ENCODE measurements at regions of chr11 and their contacts with region 1.

Region 1: DNA sequence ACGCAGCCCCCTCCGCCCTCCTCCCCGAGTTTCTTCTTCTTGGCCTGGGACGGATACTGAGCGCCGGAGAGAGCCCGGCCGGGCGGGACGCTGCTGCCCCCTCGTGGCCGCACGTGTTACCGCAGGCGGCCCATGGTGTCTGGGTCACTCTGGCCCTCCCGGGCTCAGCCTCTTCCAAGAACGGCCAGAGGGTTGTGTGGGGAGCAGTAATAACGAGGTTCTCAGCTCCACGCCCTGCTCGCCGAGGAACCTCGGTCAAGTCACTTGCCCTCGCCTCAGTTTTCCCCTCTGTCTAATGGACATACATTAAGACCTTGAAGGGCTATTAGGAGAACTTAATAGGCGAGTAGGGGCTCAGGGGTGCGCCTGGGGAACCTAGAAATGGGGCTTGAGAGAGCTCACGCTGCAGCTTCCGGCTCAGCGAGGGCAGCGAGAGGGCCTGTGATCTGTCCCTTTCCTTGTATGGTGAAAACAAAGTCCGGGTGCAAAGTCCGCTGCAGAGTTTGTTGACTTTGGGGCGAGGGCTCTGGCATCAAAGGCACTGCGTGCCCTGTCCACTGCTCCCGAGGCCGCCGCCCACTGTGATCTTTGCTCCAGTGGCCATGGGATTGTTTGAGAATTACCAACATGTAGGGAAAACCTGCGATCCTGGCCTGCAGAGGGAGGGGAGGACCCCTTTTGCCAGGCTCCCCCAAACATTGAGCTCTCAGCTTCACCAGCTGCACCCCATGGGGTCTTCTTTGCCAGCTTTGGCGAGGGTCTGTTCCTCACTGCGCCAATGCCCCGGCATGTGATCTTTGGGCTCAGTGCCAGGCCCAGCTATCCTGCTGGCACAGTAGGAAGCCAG is 14.4 kb upstream of the LRP5 start:
- DNase-seq: peak; percentile 81
- H3K4me3 Mint-ChIP-seq: no peak overlapping the region
- H3K27ac Mint-ChIP-seq: no peak overlapping the region
- H3K4me1 Mint-ChIP-seq: no peaks in the 10 kb centered on the region
- H3K27me3 Mint-ChIP-seq: peaks cover 1% of the 10 kb centered on the region

Region 2: DNA sequence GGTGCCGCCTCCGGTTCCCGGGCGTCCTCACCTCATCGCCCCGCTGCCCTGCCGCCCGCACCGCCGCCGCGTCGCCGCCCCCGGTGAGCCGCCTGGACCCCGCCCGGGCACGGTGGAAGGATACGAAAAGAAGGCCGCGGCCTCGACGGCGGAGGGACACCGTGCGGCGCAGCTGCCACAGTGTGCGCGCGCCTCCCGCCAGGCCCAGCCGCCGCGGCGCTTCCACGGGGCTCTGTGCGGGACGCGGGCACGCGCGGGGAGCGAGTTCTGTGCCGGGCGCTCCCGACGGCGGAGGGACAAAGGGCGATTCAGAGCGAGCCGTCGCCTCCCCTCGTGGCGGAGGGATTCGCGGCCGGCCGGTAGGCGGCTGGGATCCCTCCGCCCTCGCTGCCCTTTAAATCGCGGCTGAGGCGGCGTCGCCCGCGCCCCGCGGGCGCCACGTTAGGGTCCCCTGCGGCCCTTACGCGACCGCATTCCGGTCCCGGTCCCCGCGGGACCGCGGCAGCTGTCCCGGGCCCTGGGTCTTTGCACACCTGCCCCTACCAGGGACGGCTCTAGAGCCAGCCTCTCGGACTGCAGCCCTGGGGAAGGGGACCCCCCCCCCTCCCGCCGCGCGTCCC is 84.4 kb before region 1 on chr11:
- CTCF ChIA-PET with region 1: interaction called, 35 read pairs
- POLR2A ChIA-PET with region 1: no interaction called
- intact Hi-C with region 1: loop called (anchors 5 kb)
- DNase-seq: peak; percentile 81
- H3K4me3 Mint-ChIP-seq: peak overlapping the region; percentile 69
- H3K27ac Mint-ChIP-seq: peak overlapping the region; percentile 82
- H3K4me1 Mint-ChIP-seq: peaks cover 44% of the 10 kb centered on the region
- H3K27me3 Mint-ChIP-seq: peaks cover 6% of the 10 kb centered on the region

Region 3: GRCh38 chr11:68235650-68236049 is 62.4 kb before region 1 on chr11:
- CTCF ChIA-PET with region 1: no interaction called
- POLR2A ChIA-PET with region 1: no interaction called
- intact Hi-C with region 1: no loop called
- DNase-seq: no peak
- H3K4me3 Mint-ChIP-seq: no peak overlapping the region
- H3K27ac Mint-ChIP-seq: no peak overlapping the region
- H3K4me1 Mint-ChIP-seq: no peaks in the 10 kb centered on the region
- H3K27me3 Mint-ChIP-seq: peaks cover 8% of the 10 kb centered on the region

Region 4: GRCh38 chr11:68257475-68258362 is 40.3 kb before region 1 on chr11:
- CTCF ChIA-PET with region 1: interaction called, 227 read pairs
- POLR2A ChIA-PET with region 1: interaction called, 3 read pairs
- intact Hi-C with region 1: loop called (anchors 1 kb)
- DNase-seq: peak; percentile 94
- H3K4me3 Mint-ChIP-seq: no peak overlapping the region
- H3K27ac Mint-ChIP-seq: no peak overlapping the region
- H3K4me1 Mint-ChIP-seq: peaks cover 3% of the 10 kb centered on the region
- H3K27me3 Mint-ChIP-seq: no peaks in the 10 kb centered on the region

Region 5: DNA sequence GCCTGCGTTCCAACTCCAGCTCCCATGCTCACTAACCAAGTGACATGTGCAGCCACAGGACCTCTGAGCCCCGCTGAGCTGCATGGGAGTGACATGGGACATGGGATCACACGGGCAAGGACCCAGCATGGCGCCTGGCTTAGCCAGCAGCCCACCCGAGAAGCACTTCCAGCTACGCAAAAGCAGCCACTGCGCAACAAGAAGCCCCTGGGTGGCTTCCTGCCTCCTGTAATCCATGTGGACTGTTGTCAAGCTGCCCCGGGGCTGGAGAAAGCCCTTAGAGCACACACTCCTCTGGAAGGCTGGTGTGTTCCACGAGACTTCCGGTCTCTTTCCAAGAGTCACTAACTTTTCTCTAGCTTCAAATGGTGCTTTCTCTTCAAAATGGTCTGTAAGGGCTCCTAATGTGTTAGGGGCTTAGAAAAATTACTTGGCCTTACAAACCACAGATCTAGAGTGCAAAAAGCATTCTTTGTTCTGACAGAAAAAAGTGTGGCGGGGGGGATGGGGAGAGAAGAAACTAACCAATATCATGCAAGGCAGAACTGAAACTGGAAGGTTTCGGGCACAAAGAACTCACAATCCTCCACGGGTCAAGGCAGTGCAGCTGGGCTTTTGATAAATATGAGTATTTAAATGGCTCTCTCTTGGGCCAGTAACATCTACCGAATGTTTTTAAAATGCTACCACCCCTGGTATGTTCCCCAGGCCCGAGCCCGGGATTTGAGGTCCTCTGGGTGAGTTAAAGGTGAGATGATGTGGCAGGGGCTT is 31.7 kb before region 1 on chr11:
- CTCF ChIA-PET with region 1: interaction called, 46 read pairs
- POLR2A ChIA-PET with region 1: no interaction called
- intact Hi-C with region 1: loop called (anchors 1 kb)
- DNase-seq: no peak
- H3K4me3 Mint-ChIP-seq: no peak overlapping the region
- H3K27ac Mint-ChIP-seq: no peak overlapping the region
- H3K4me1 Mint-ChIP-seq: peaks cover 14% of the 10 kb centered on the region
- H3K27me3 Mint-ChIP-seq: no peaks in the 10 kb centered on the region

Region 6: DNA sequence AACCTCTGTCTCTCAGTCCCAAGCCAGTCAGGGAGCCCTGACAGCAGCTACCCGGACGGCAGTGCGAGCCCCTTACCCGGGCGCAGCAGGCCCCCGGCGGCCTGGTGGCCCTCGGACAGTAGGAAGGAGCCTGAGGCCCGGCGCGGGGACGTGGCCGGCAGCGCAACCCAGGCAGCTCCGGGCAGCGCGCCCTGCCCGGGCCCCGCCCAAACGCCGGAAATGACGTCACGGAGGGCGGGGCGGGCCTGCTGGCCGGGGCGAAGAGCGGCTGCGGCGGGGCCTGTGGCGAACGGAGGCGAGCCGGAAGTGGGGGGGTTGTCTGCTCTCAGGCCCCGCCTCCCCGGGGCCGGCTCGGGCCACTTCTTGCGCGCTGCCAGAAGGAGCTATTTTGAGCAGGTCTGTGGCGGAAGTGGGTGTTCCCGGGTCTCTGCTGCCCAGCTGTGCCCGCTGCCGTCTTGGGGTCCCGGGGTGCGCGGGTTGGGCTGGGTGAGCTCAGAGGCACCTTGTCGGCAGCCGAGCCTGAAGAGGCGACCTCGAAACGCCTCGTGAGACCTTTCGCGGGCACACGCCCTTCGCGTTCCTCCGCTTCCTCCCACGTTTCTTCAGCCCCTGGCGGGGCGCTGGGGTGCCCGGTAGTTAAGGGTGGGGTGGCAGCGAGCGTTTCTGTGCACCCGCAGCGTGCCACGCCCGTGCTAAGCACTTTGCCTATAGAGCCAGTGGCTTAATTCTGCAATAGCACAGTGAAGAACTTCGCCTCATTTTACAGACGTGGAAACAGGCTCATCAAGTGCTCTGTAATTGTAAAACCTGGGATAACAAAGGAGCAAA is 26.0 kb before region 1 on chr11 and contains the start of gene C11orf24:
- CTCF ChIA-PET with region 1: interaction called, 46 read pairs
- POLR2A ChIA-PET with region 1: interaction called, 8 read pairs
- intact Hi-C with region 1: loop called (anchors 1 kb)
- DNase-seq: peak; percentile 95
- H3K4me3 Mint-ChIP-seq: peak within 1 kb of the TSS; percentile 97
- H3K27ac Mint-ChIP-seq: peak within 1 kb of the TSS; percentile 93
- H3K4me1 Mint-ChIP-seq: peaks cover 24% of the 10 kb centered on the region
- H3K27me3 Mint-ChIP-seq: no peaks in the 10 kb centered on the region
- total RNA-seq, gene C11orf24: 28.0 to 28.9 TPM

Region 7: GRCh38 chr11:68282141-68282970 is 15.7 kb before region 1 on chr11:
- CTCF ChIA-PET with region 1: interaction called, 19 read pairs
- POLR2A ChIA-PET with region 1: no interaction called
- intact Hi-C with region 1: no loop called
- DNase-seq: peak; percentile 72
- H3K4me3 Mint-ChIP-seq: peak overlapping the region; percentile 27
- H3K27ac Mint-ChIP-seq: peak overlapping the region; percentile 39
- H3K4me1 Mint-ChIP-seq: peaks cover 19% of the 10 kb centered on the region
- H3K27me3 Mint-ChIP-seq: peaks cover 8% of the 10 kb centered on the region